Panc1 (cell line): ENCODE measurements at regions of chr11 and their contacts with region 1.

Region 1: GRCh38 chr11:6693342-6694228 is 10.4 kb upstream of the MRPL17 start:
- DNase-seq: peak; percentile 83
- ATAC-seq: no peak
- H3K4me3 ChIP-seq: no peak overlapping the region
- H3K27ac ChIP-seq: no peak overlapping the region
- H3K4me1 ChIP-seq: no peaks in the 10 kb centered on the region
- H3K27me3 ChIP-seq: peaks cover 5% of the 10 kb centered on the region; the same call in 1 of the 2 replicates
- CTCF ChIP-seq: no peak

Region 2: GRCh38 chr11:6498121-6498520 is 195.5 kb before region 1 on chr11:
- CTCF ChIA-PET with region 1: no interaction called
- POLR2A ChIA-PET with region 1: interaction called, 10 read pairs
- in situ Hi-C with region 1: no loop called
- intact Hi-C with region 1: no loop called
- DNase-seq: no peak
- ATAC-seq: 0 out of 2 replicates have a peak, but pooled peaks have one; percentile 11
- H3K4me3 ChIP-seq: no peak overlapping the region
- H3K27ac ChIP-seq: no peak overlapping the region
- H3K4me1 ChIP-seq: no peaks in the 10 kb centered on the region
- H3K27me3 ChIP-seq: no peaks in the 10 kb centered on the region
- CTCF ChIP-seq: no peak

Region 3: DNA sequence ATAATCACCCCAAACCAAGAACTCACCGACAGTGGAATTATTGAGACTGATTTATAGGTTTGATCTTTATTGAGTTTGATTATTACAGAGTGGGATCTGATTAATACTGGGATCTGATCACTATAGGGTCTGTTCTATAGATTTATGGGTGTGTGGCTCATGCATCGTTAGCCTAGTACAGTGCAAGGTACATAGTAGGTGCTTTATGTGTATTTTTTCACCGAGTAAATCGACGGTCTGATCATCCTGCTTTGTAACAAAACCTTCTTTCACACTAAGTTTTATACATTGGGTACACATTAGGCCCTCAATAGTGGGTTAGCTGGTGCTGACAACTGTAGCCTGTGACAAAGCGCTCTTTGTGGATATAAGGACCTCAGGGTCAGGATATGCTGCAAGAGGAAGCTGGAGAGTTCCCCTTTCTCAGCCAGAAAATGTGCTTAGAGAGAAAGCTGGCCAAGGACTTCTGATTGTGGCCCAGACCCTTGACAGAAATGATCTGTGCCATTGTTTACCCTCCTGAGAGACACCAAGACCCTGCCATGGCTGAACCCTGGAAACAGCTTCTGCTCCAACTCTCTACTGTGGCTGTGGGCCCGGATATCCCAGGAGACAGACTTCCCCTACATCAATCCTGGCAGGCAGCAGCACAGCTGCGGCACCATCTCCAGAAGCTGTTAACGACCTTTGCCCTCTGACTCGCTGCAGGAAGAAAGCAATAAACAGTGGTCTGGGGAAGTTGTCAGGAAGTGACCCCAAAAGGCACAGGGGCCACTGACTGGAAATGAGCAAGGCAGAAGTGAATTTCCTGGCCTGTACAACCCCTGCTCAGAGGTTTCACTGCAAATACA is 58.3 kb before region 1 on chr11:
- CTCF ChIA-PET with region 1: no interaction called
- POLR2A ChIA-PET with region 1: no interaction called
- in situ Hi-C with region 1: no loop called
- intact Hi-C with region 1: no loop called
- DNase-seq: no peak
- ATAC-seq: no peak
- H3K4me3 ChIP-seq: no peak overlapping the region
- H3K27ac ChIP-seq: peak overlapping the region; percentile 25
- H3K4me1 ChIP-seq: peaks cover 14% of the 10 kb centered on the region
- H3K27me3 ChIP-seq: no peaks in the 10 kb centered on the region; the same call in 1 of the 2 replicates
- CTCF ChIP-seq: no peak